HepG2 (cell line): ENCODE measurements at regions of chr16 and their contacts with region 1.

Region 1: GRCh38 chr16:51762081-51762996 is 611.3 kb upstream of the SALL1 start:
- DNase-seq: peak; percentile 52
- ATAC-seq: peak; percentile 100
- H3K4me3 ChIP-seq: no peak overlapping the region
- H3K27ac ChIP-seq: no peak overlapping the region
- H3K4me1 ChIP-seq: no peaks in the 10 kb centered on the region
- H3K27me3 ChIP-seq: no peaks in the 10 kb centered on the region; a peak in 2 of 5 replicates
- CTCF ChIP-seq: peak; percentile 96
- EP300 ChIP-seq: no peak
- POLR2A ChIP-seq: no peak
- RAD21 ChIP-seq: peak; percentile 91

Region 2: DNA sequence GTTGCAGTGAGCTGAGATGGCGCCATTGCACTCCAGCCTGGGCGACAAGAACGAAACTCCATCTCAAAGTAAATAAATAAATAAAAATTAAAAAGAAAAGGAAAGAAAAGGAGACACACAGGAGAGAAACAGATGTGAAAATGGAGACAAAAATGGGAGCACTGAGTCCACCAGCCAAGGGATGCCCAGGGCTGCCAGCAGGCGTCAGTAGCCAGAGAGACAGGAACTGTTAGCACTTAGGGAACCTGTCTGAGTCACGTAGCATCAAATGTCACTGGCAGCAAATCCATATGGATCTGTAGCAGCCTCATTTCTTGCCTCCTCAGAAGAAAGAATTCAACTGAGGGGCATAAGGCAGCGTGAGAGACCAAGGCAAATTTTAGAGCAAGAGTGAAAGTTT is 940.8 kb before region 1 on chr16:
- CTCF ChIA-PET with region 1: no interaction called
- POLR2A ChIA-PET with region 1: no interaction called
- in situ Hi-C with region 1: no loop called
- intact Hi-C with region 1: loop called (anchors 5 kb)
- DNase-seq: peak; percentile 37
- ATAC-seq: peak; percentile 87
- H3K4me3 ChIP-seq: no peak overlapping the region
- H3K27ac ChIP-seq: no peak overlapping the region
- H3K4me1 ChIP-seq: no peaks in the 10 kb centered on the region
- H3K27me3 ChIP-seq: peaks cover 3 to 24% of the 10 kb centered on the region in 2 experiments; a peak in 2 of 5 replicates
- CTCF ChIP-seq: peak; percentile 60
- EP300 ChIP-seq: no peak
- POLR2A ChIP-seq: no peak
- RAD21 ChIP-seq: no peak

Region 3: DNA sequence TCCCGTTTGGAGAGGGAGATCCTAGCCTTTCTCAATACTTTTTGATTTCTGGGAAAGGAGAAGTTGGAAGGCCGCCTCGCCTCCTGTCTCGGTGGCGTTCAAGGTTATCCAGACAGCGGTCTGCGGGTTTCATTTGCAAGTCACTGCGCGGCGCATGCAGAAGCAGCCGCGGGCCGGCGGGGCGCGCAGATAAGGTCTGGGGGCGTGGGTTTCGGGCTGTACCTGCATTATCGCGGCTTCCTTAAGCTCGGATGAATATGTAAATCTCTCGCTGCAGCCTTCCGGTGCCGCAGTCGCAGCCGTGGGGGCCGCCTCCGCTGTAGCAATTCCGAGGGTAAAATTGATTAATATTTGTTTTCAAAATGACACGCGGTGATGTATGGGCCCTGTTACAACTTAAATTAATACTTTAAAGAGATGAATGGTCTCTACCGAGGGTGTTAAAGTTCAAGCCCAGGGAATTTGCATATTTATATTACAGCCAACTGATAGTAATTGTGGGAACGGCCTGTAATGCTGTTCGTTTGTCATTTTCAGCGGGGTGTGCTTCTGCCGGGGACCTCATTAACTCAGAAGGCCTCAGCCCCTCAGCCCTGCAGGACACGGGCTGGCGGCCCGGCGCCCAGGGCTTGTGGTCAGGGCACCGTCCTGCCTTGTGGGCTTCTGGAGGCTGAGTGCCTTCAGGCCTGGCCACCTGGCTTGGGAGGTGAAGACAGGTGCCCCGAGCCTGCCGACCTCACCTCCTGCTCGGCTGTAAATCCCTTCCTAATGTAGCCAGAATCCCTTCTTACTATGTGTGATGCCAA is 921.1 kb before region 1 on chr16:
- CTCF ChIA-PET with region 1: no interaction called
- POLR2A ChIA-PET with region 1: no interaction called
- in situ Hi-C with region 1: no loop called
- intact Hi-C with region 1: loop called (anchors 1 kb)
- DNase-seq: no peak
- ATAC-seq: no peak
- H3K4me3 ChIP-seq: no peak overlapping the region
- H3K27ac ChIP-seq: no peak overlapping the region
- H3K4me1 ChIP-seq: peaks cover 9% of the 10 kb centered on the region; the same call in 1 of the 2 replicates
- H3K27me3 ChIP-seq: peaks cover 0 to 9% of the 10 kb centered on the region in 2 experiments; a peak in 1 of 5 replicates
- CTCF ChIP-seq: no peak
- EP300 ChIP-seq: no peak
- POLR2A ChIP-seq: no peak
- RAD21 ChIP-seq: no peak